Natural killer cell (primary cell): ENCODE measurements at regions of chr13 and their contacts with region 1.

Region 1: GRCh38 chr13:19959831-19960652 is 1.5 kb downstream of the ZMYM2 start:
- DNase-seq: peak; percentile 73 to 95
- ATAC-seq: peak; percentile 50 to 68 (median 52)
- H3K4me3 ChIP-seq: peak overlapping the region; percentile 82
- H3K4me3 Mint-ChIP-seq: peak overlapping the region; percentile 95
- H3K27ac ChIP-seq: peak overlapping the region; percentile 86
- H3K27ac Mint-ChIP-seq: peak overlapping the region; percentile 91 to 96
- H3K4me1 ChIP-seq: peaks cover 8% of the 10 kb centered on the region
- H3K4me1 Mint-ChIP-seq: peaks cover 23 to 29% of the 10 kb centered on the region in 2 donors
- H3K27me3 ChIP-seq: no peaks in the 10 kb centered on the region
- H3K27me3 Mint-ChIP-seq: peaks cover 0 to 3% of the 10 kb centered on the region in 2 donors
- CTCF ChIP-seq: peak; percentile 83

Region 2: DNA sequence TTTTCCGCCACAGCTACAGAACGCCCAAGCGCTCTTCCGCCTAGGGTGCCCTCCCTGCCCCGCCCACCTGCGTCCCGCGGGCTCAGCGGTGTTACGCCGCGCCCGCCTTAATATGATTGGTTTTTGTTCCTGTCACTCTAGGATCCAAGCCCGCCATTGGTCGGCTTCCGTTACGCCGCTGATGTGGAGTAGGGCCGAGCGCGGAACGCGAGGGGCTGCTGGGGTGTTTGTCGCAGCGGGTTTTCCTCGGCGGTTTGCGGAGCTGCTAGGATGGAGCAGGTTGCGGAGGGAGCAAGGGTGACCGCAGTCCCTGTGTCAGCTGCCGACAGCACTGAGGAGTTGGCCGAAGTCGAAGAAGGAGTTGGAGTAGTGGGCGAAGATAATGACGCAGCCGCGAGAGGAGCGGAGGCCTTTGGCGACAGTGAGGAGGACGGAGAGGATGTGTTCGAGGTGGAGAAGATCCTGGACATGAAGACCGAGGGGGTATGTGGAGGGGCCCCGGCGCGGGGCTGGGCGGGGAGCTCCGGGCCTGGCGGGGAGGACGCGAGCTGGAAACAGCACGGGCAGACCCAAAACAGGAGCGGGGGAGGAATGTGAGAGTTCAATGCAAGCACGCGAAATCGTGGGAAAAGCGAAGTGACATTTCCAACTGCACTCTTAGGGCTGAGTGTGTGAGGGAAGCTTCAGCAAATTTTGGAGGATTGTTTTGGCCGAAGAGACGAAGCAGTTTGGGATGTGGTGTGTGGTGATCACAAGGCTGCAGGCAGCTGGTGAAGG is 326.4 kb before region 1 on chr13 and contains the start of gene MPHOSPH8:
- intact Hi-C with region 1: loop called (anchors 5 kb)
- DNase-seq: peak; percentile 89 to 97
- ATAC-seq: peak; percentile 96 to 99 (median 97)
- H3K4me3 ChIP-seq: peak within 1 kb of the TSS; percentile 80
- H3K4me3 Mint-ChIP-seq: peak within 1 kb of the TSS; percentile 100
- H3K27ac ChIP-seq: peak within 1 kb of the TSS; percentile 89
- H3K27ac Mint-ChIP-seq: peak within 1 kb of the TSS; percentile 99
- H3K4me1 ChIP-seq: peaks cover 17% of the 10 kb centered on the region
- H3K4me1 Mint-ChIP-seq: peaks cover 35 to 41% of the 10 kb centered on the region in 2 donors
- H3K27me3 ChIP-seq: no peaks in the 10 kb centered on the region
- H3K27me3 Mint-ChIP-seq: peaks cover 0 to 16% of the 10 kb centered on the region in 2 donors
- CTCF ChIP-seq: no peak
- total RNA-seq, gene MPHOSPH8: 54.2 to 64.7 (median 59.8) TPM

Region 3: GRCh38 chr13:19766213-19766990 is 193.6 kb before region 1 on chr13:
- intact Hi-C with region 1: no loop called
- DNase-seq: no peak
- ATAC-seq: peak in 1 of 3 donors; percentile 21
- H3K4me3 ChIP-seq: no peak overlapping the region
- H3K4me3 Mint-ChIP-seq: peak overlapping the region; percentile 32
- H3K27ac ChIP-seq: no peak overlapping the region
- H3K27ac Mint-ChIP-seq: peak overlapping the region; percentile 43 to 53
- H3K4me1 ChIP-seq: peaks cover 22% of the 10 kb centered on the region
- H3K4me1 Mint-ChIP-seq: peaks cover 51 to 57% of the 10 kb centered on the region in 2 donors
- H3K27me3 ChIP-seq: no peaks in the 10 kb centered on the region
- H3K27me3 Mint-ChIP-seq: no peaks in the 10 kb centered on the region
- CTCF ChIP-seq: no peak

Region 4: DNA sequence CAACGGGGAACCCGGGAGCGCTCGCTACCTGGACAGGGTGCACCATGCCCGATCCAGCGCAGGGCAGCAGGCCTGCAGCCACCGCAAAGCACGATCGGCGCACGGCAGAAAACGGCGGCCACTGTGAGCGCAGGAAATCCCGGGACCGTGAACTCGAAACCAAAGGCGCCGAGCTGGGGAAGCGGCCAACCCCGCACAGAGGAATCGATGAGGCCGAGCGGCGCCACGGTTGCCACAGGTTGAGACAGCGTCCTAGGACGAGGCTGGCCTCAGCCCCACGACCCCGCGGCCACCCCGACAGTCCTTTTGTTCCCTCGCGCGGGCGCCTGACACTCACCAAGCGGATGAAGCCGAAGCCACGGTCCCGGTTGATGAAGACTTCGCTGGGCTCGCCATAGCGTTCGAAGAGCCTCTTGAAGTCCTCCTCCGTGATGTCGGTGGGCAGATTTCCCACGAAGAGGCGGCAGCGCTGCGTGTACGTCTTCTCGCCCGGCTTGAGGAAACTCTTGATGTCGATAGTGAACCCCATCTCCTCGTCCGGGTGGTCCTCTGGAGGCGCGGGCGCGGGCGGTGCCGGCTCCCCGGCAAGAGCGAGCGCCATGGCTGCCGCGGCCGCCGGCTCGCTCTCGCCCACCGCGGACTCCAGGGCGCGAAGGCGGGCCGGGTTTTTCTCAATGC is 177.9 kb before region 1 on chr13:
- intact Hi-C with region 1: loop called (anchors 10 kb)
- DNase-seq: peak; percentile 55 to 74
- ATAC-seq: peak; percentile 58 to 69 (median 64)
- H3K4me3 ChIP-seq: peak overlapping the region; percentile 96
- H3K4me3 Mint-ChIP-seq: peak overlapping the region; percentile 99
- H3K27ac ChIP-seq: peak overlapping the region; percentile 93
- H3K27ac Mint-ChIP-seq: peak overlapping the region; percentile 98 to 99
- H3K4me1 ChIP-seq: peaks cover 13% of the 10 kb centered on the region
- H3K4me1 Mint-ChIP-seq: peaks cover 6 to 7% of the 10 kb centered on the region in 2 donors
- H3K27me3 ChIP-seq: no peaks in the 10 kb centered on the region
- H3K27me3 Mint-ChIP-seq: no peaks in the 10 kb centered on the region
- CTCF ChIP-seq: no peak